GM10248 (cell line): ENCODE measurements at regions of chr4 and their contacts with region 1.

Region 1: DNA sequence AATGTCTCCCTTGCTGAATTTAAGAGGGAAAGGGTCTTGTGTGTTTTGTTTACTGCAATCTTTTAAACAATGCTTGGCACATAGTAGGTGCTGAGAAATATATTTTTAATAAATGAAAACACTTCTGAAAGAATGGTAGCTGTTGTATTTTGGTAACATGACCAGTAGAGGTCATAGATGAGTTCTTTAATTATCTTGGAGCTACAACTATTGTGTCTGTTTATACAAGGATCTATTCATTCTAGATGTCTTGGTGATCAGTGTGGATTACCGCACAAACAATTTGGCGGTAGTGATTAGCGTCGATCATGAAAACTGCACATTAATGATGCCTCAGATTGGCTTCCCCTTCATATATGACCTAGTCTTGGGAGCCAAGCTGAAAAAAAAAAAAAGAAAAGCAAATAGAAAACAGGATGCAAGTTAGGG is 21.4 kb upstream of the SCRG1 start:
- DNase-seq: peak; percentile 24
- CTCF ChIP-seq: peak; percentile 40

Region 2: DNA sequence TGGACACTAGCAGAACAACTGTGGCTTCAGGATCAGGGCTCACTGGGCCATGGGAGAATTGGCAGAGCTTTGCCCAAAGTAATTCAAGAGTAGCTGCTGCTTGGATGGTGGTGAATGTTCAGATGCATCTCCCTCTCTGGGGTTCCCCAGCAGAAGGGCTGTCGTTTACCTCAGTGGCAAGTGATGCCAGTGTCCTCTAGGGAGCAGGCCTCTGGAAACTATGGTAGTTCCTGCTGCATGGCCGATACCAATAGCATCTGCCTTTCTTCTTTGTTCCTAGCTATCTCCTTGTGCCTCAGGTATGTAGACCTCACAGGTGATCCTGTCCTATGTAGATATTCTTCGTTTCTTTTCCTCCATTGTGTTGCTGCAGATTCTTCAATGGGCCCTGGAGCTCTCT is 112.6 kb before region 1 on chr4:
- CTCF ChIA-PET with region 1: interaction called, 18 read pairs
- POLR2A ChIA-PET with region 1: no interaction called
- DNase-seq: no peak
- CTCF ChIP-seq: no peak

Region 3: GRCh38 chr4:173318648-173319211 is 101.6 kb before region 1 on chr4:
- CTCF ChIA-PET with region 1: interaction called, 201 read pairs
- POLR2A ChIA-PET with region 1: interaction called, 3 read pairs
- DNase-seq: no peak
- CTCF ChIP-seq: peak; percentile 9

Region 4: GRCh38 chr4:173405840-173406606 is 14.3 kb before region 1 on chr4:
- CTCF ChIA-PET with region 1: interaction called, 38 read pairs
- POLR2A ChIA-PET with region 1: no interaction called
- DNase-seq: peak; percentile 20
- CTCF ChIP-seq: no peak

Region 5: GRCh38 chr4:173448603-173449379 is 28.5 kb after region 1 on chr4:
- CTCF ChIA-PET with region 1: interaction called, 12 read pairs
- POLR2A ChIA-PET with region 1: no interaction called
- DNase-seq: peak; percentile 24
- CTCF ChIP-seq: no peak

Region 6: DNA sequence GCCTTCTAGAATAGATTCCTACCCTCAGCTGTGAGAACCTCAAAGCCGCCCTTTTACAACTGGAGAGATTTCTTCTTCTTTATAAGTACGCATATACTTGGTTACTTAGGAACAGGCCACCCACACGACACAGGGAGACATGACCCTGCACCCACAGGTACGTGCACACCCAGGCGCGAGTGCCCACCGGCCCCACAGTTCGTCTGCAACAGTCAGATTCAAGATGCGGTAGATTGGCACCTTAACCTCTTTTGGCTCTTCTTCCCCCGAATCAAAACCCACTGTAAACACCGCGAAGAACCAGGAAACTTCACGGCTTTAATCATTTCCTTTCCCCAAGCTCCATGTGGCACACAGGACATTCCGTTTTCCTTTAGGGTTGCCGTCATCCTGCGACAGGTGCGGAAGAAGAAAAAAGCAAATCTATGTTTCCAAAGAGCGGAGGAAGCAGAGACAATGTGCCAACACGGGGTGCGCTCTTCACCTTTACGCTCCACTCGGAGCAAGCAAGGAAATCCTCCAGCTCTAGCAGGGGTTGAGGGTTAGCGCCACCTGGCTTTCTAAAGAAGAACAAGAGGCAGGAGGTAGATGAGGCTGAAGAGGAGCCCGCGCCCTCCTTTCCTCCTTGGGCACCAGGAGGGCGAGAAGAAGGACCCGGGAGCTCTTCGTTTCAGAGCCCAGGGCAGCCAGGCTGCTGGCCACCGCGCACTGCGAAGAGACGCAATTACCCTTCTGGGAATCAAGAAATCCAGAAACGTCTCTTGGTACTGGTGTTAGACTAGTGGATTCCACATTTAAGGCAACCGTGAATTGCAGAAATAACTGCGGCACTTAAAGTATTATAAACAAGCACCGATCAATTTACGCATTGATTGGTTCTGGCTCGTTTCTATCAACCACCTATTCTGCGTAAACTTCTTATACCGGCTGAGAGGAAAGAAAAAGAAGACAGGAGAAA is 74.0 kb after region 1 on chr4:
- CTCF ChIA-PET with region 1: interaction called, 68 read pairs
- POLR2A ChIA-PET with region 1: no interaction called
- DNase-seq: peak; percentile 80
- CTCF ChIP-seq: peak; percentile 91